Naive thymus-derived CD8-positive, alpha-beta T cell (primary cell): ENCODE measurements at regions of chr12 and their contacts with region 1.

Region 1: GRCh38 chr12:122895705-122896636 is at the start of gene VPS37B:
- DNase-seq: peak; percentile 83 to 97 (median 94)
- ATAC-seq: peak; percentile 63 to 73
- H3K4me3 Mint-ChIP-seq: peak within 1 kb of the TSS; percentile 90 to 99 (median 95)
- H3K27ac Mint-ChIP-seq: peak within 1 kb of the TSS; percentile 94 to 100 (median 99)
- H3K4me1 Mint-ChIP-seq: peaks cover 33 to 96% (median 88%) of the 10 kb centered on the region in 4 donors
- H3K27me3 Mint-ChIP-seq: no peaks in the 10 kb centered on the region
- polyA plus RNA-seq, gene VPS37B: 15.2 to 19.4 (median 19.3) TPM

Region 2: GRCh38 chr12:122860346-122861090 is 35.5 kb before region 1 on chr12:
- POLR2A ChIA-PET with region 1: interaction called, 13 read pairs
- DNase-seq: peak; percentile 63 to 89 (median 76)
- ATAC-seq: peak; percentile 55 to 57
- H3K4me3 Mint-ChIP-seq: no peak overlapping the region
- H3K27ac Mint-ChIP-seq: peak overlapping the region in 5 of 10 donors; percentile 18 to 65 (median 53)
- H3K4me1 Mint-ChIP-seq: peaks cover 0 to 18% (median 12%) of the 10 kb centered on the region in 4 donors
- H3K27me3 Mint-ChIP-seq: no peaks in the 10 kb centered on the region

Region 3: DNA sequence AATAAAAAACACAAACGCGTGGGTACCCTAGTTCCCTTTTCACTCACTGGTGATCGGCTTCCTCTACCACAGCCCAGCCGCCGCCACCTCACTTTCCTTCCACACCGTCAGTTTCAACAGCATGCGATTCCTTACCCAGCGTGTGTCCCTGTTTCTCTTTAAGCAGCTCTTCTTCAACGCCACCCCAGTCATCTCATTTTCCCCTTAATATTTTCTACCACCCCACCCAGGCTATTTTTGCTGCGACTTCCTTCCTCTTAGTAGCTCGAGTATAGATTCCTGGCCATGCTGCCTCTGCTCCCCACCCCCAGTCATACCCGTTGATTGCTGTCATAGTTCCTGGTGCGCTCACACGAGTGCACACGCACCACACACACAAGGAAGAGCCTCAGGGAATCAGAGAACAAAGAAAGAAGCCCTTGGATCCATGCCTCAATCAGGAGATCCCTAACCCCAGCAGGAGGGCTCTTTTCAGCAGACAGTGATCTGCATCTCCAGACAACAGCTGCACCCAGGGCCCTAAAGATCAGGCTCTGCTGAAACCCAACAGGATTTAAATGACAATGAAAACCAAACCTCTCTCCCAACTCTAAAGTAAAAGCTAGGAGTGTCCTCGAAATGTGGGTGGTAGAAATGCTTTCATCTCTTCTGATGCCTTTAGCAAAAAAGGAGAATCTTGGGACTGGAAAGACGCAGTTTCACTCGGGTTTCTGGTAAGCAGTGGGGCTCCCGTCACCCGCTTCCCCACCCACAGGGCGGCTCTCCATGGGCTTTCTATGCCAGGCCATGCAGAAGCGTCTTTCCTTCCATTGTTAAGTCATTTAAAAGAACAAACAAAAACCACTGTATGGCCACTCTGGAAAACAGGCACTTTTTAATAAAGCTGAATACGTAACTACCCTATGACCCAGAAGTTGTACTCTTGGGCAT is 23.9 kb before region 1 on chr12:
- POLR2A ChIA-PET with region 1: interaction called, 27 read pairs
- DNase-seq: peak in 4 of 10 donors; percentile 37 to 62 (median 42)
- ATAC-seq: peak; percentile 42 to 49
- H3K4me3 Mint-ChIP-seq: peak overlapping the region; percentile 75 to 97 (median 91)
- H3K27ac Mint-ChIP-seq: peak overlapping the region; percentile 88 to 97 (median 94)
- H3K4me1 Mint-ChIP-seq: peaks cover 31 to 86% (median 68%) of the 10 kb centered on the region in 4 donors
- H3K27me3 Mint-ChIP-seq: no peaks in the 10 kb centered on the region

Region 4: GRCh38 chr12:122951406-122951805 is 55.4 kb after region 1 on chr12:
- POLR2A ChIA-PET with region 1: interaction called, 10 read pairs
- DNase-seq: no peak
- ATAC-seq: no peak
- H3K4me3 Mint-ChIP-seq: no peak overlapping the region
- H3K27ac Mint-ChIP-seq: no peak overlapping the region
- H3K4me1 Mint-ChIP-seq: peaks cover 0 to 22% (median 7%) of the 10 kb centered on the region in 4 donors
- H3K27me3 Mint-ChIP-seq: no peaks in the 10 kb centered on the region